HepG2 (cell line): ENCODE measurements at regions of chr18 and their contacts with region 1.

Region 1: DNA sequence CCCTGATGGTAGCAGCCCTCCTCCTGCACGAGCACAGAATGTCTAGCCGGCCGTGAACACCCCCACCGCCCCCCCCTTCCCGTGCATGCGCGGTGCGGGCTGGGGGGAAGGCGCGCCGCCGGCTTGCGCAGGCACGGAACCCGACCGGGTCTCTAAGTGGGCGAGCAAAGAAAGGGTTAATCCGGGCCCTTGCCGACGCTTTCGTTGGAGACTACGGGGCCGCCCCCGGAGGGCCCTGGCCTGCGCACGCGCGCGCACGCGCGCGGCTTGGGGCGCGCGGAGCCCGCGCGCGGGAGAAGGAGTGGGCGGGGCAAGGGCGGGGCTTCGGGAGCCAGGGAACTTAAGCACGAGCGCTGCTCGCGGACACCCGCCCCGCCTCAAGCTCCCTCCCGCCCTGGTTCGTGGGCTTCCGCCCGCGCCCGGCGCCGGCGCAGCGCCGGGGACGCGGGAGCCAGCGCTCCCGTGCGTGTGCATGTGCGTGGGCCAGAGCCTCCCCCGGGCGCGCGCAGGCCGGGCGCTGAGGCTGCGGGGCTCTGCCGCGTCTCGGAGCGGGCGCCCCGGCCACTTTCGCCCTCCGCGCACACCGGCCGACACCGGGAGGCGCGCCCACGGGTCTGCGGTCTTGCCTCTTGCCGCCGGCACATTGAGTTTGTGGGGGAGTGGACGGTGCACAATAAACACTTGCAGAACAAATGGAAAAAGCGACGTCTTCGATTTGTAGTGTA is 617 bp upstream of the ZBTB14 start:
- DNase-seq: peak; percentile 90
- ATAC-seq: peak; percentile 44
- H3K4me3 ChIP-seq: peak overlapping the region; percentile 67 to 79 (median 74); a peak in 5 of 6 replicates
- H3K27ac ChIP-seq: peak overlapping the region; percentile 96
- H3K4me1 ChIP-seq: peaks cover 51% of the 10 kb centered on the region
- H3K27me3 ChIP-seq: no peaks in the 10 kb centered on the region; a peak in 1 of 5 replicates
- CTCF ChIP-seq: no peak
- EP300 ChIP-seq: peak in 1 of 2 experiments; percentile 15; a peak in 1 of 4 replicates
- POLR2A ChIP-seq: peak in 1 of 2 experiments; percentile 67; a peak in 3 of 4 replicates
- RAD21 ChIP-seq: peak; percentile 48; the same call in 1 of the 2 replicates

Region 2: GRCh38 chr18:5122270-5122669 is 173.9 kb before region 1 on chr18:
- CTCF ChIA-PET with region 1: no interaction called
- POLR2A ChIA-PET with region 1: no interaction called
- in situ Hi-C with region 1: no loop called
- intact Hi-C with region 1: no loop called
- DNase-seq: no peak
- ATAC-seq: no peak
- H3K4me3 ChIP-seq: no peak overlapping the region
- H3K27ac ChIP-seq: no peak overlapping the region
- H3K4me1 ChIP-seq: no peaks in the 10 kb centered on the region
- H3K27me3 ChIP-seq: no peaks in the 10 kb centered on the region; a peak in 1 of 5 replicates
- CTCF ChIP-seq: no peak
- EP300 ChIP-seq: no peak
- POLR2A ChIP-seq: no peak
- RAD21 ChIP-seq: no peak

Region 3: DNA sequence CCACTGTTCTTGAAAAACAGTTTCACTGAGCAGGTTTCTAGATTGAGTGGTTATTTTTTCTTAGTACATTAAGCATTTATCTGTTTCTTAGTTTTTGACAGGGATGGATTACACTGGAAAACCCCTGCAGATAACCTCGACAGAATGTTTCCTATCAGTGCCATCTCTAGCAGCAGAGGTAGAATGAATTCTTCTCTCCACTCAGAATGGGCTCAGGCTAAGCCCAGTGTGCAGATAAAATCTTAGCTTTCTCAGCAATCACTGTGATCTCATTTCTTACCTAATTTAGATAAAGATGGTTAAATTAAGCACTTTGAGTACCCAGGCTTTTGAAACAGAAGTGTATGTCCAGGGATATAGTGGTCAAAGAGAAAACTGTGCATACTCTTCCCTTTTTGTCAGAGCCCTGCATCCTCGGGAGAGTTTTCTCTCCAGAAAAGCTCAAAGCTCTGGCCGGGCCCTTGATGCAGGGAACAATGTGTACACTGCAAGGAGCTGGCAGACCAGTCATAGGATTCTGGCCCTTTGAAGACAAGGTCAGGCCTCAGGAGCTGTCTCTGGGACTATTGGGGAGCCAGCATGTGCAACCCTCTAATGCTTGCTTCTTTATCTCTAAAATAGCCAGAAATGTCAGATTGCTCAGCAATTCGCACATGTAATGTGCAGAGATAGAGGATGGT is 88.5 kb before region 1 on chr18:
- CTCF ChIA-PET with region 1: no interaction called
- POLR2A ChIA-PET with region 1: no interaction called
- in situ Hi-C with region 1: no loop called
- intact Hi-C with region 1: no loop called
- DNase-seq: no peak
- ATAC-seq: no peak
- H3K4me3 ChIP-seq: no peak overlapping the region
- H3K27ac ChIP-seq: no peak overlapping the region
- H3K4me1 ChIP-seq: no peaks in the 10 kb centered on the region
- H3K27me3 ChIP-seq: no peaks in the 10 kb centered on the region
- CTCF ChIP-seq: no peak
- EP300 ChIP-seq: no peak
- POLR2A ChIP-seq: no peak
- RAD21 ChIP-seq: no peak

Region 4: GRCh38 chr18:5339202-5339834 is 43.2 kb after region 1 on chr18:
- CTCF ChIA-PET with region 1: no interaction called
- POLR2A ChIA-PET with region 1: interaction called, 20 read pairs
- in situ Hi-C with region 1: no loop called
- intact Hi-C with region 1: loop called (anchors 1 kb)
- DNase-seq: peak; percentile 87
- ATAC-seq: peak; percentile 97
- H3K4me3 ChIP-seq: peak overlapping the region in 2 of 3 experiments; percentile 38 to 49; a peak in 2 of 6 replicates
- H3K27ac ChIP-seq: peak overlapping the region; percentile 92
- H3K4me1 ChIP-seq: peaks cover 42% of the 10 kb centered on the region
- H3K27me3 ChIP-seq: no peaks in the 10 kb centered on the region
- CTCF ChIP-seq: peak; percentile 44
- EP300 ChIP-seq: peak; percentile 16 to 87; a peak in 3 of 4 replicates
- POLR2A ChIP-seq: peak in 1 of 2 experiments; percentile 52; a peak in 1 of 4 replicates
- RAD21 ChIP-seq: peak; percentile 10; the same call in 1 of the 2 replicates

Region 5: GRCh38 chr18:5424903-5425664 is 128.9 kb after region 1 on chr18:
- CTCF ChIA-PET with region 1: no interaction called
- POLR2A ChIA-PET with region 1: interaction called, 3 read pairs
- in situ Hi-C with region 1: no loop called
- intact Hi-C with region 1: loop called (anchors 2 kb)
- DNase-seq: peak; percentile 26
- ATAC-seq: peak; percentile 57; the same call in 2 of the 3 replicates
- H3K4me3 ChIP-seq: no peak overlapping the region
- H3K27ac ChIP-seq: no peak overlapping the region
- H3K4me1 ChIP-seq: no peaks in the 10 kb centered on the region
- H3K27me3 ChIP-seq: peaks cover 0 to 9% of the 10 kb centered on the region in 2 experiments; a peak in 1 of 5 replicates
- CTCF ChIP-seq: peak; percentile 48
- EP300 ChIP-seq: no peak
- POLR2A ChIP-seq: no peak
- RAD21 ChIP-seq: 0 out of 2 replicates have a peak, but pooled peaks have one; percentile 12

Region 6: GRCh38 chr18:5455674-5456073 is 159.5 kb after region 1 on chr18:
- CTCF ChIA-PET with region 1: no interaction called
- POLR2A ChIA-PET with region 1: no interaction called
- in situ Hi-C with region 1: no loop called
- intact Hi-C with region 1: no loop called
- DNase-seq: no peak
- ATAC-seq: no peak
- H3K4me3 ChIP-seq: no peak overlapping the region
- H3K27ac ChIP-seq: no peak overlapping the region
- H3K4me1 ChIP-seq: no peaks in the 10 kb centered on the region
- H3K27me3 ChIP-seq: peaks cover 0 to 5% of the 10 kb centered on the region in 2 experiments; a peak in 1 of 5 replicates
- CTCF ChIP-seq: no peak
- EP300 ChIP-seq: no peak
- POLR2A ChIP-seq: no peak
- RAD21 ChIP-seq: no peak

Region 7: GRCh38 chr18:5604778-5605177 is 308.6 kb after region 1 on chr18:
- CTCF ChIA-PET with region 1: no interaction called
- POLR2A ChIA-PET with region 1: no interaction called
- in situ Hi-C with region 1: no loop called
- intact Hi-C with region 1: no loop called
- DNase-seq: no peak
- ATAC-seq: no peak; the same call in 2 of the 3 replicates
- H3K4me3 ChIP-seq: no peak overlapping the region
- H3K27ac ChIP-seq: no peak overlapping the region
- H3K4me1 ChIP-seq: peaks cover 8% of the 10 kb centered on the region
- H3K27me3 ChIP-seq: 0 out of 5 replicates have a peak, but pooled peaks cover 0 to 1% of the 10 kb centered on the region in 2 experiments
- CTCF ChIP-seq: no peak
- EP300 ChIP-seq: no peak
- POLR2A ChIP-seq: no peak
- RAD21 ChIP-seq: no peak